ENCODE measurements at regions of chr12 and their contacts with region 1.

Region 1: GRCh38 chr12:122752464-122753318 is at the start of gene DENR:
- DNase-seq: peak; percentile 98 to 99
- ATAC-seq: peak; percentile 97
- total RNA-seq, gene DENR: 31.9 to 36.9 TPM

Region 2: DNA sequence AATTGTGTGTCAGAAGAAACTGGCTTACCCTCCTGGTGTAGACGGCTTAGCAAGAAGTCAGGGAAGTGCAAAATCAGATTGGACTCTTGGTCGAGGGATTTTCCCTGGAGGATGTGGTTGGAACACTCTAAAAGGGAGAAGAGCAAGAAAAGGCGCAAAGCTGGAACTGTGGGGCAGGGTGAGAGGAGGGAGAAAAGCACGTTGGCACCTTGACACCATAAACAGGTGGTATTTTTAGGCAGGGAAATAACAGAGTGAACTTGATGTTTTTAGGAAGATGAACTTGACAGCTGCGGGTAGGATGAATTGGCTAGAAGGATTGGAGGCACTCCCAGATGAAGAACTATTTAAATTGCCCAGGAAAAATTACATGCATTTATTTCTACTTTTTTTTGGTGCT is 117.2 kb before region 1 on chr12:
- intact Hi-C with region 1: loop called (anchors 5 to 10 kb)
- DNase-seq: no peak
- ATAC-seq: no peak

Measured in left colon (tissue), 2 donors.